ENCODE measurements at regions of chr10 and their contacts with region 1.

Region 1: GRCh38 chr10:3197348-3198003 is 24.9 kb upstream of the PITRM1 start:
- DNase-seq: peak; percentile 94
- H3K4me3 Mint-ChIP-seq: no peak overlapping the region
- H3K27ac Mint-ChIP-seq: no peak overlapping the region
- H3K4me1 Mint-ChIP-seq: peaks cover 11% of the 10 kb centered on the region
- H3K27me3 Mint-ChIP-seq: peaks cover 70% of the 10 kb centered on the region

Region 2: GRCh38 chr10:3095373-3096139 is 101.9 kb before region 1 on chr10:
- CTCF ChIA-PET with region 1: no interaction called
- POLR2A ChIA-PET with region 1: interaction called, 3 read pairs
- intact Hi-C with region 1: loop called (anchors 1 kb)
- DNase-seq: peak; percentile 80
- H3K4me3 Mint-ChIP-seq: peak overlapping the region; percentile 17
- H3K27ac Mint-ChIP-seq: peak overlapping the region; percentile 87
- H3K4me1 Mint-ChIP-seq: peaks cover 74% of the 10 kb centered on the region
- H3K27me3 Mint-ChIP-seq: no peaks in the 10 kb centered on the region

Region 3: GRCh38 chr10:3151889-3152565 is 45.4 kb before region 1 on chr10:
- CTCF ChIA-PET with region 1: no interaction called
- POLR2A ChIA-PET with region 1: no interaction called
- intact Hi-C with region 1: no loop called
- DNase-seq: no peak
- H3K4me3 Mint-ChIP-seq: no peak overlapping the region
- H3K27ac Mint-ChIP-seq: peak overlapping the region; percentile 44
- H3K4me1 Mint-ChIP-seq: peaks cover 11% of the 10 kb centered on the region
- H3K27me3 Mint-ChIP-seq: no peaks in the 10 kb centered on the region

Region 4: DNA sequence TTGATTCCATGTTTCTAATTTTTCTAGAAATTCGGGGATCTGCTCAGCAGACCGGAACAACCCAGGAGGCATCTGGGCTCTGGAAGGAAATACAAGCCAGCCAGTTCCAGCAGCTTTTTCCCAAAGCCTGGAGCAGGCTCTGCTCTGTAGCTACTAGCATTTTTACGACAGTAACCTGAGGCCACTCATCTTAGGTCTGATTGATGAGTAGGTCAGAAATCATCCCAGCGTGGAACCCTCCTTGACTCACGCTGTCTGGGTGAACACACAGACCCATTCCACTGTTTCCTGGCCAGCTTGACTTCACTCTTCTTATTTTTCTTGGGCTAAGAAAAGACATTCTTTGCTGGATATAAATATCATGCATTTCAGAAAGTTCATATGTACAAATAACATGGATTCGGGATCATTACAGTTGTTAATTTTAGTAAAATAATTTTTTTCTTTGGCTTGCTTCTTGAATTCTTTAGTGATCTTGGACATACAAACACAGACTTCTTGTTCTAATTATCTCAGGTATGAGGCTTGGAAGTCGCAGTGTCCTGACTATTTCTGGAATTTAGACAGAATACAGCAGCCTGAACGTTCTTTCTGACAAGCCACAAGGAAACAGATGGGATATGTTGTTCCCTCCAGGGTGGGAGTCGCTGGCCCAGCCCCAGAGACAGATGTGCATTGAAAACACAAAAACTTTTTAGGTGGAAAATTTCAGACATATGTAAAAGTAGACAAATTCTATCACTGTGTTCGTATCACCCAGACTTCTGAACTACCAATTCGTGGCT is 29.7 kb after region 1 on chr10:
- CTCF ChIA-PET with region 1: interaction called, 16 read pairs
- POLR2A ChIA-PET with region 1: no interaction called
- intact Hi-C with region 1: loop called (anchors 1 kb)
- DNase-seq: no peak
- H3K4me3 Mint-ChIP-seq: no peak overlapping the region
- H3K27ac Mint-ChIP-seq: no peak overlapping the region
- H3K4me1 Mint-ChIP-seq: peaks cover 23% of the 10 kb centered on the region
- H3K27me3 Mint-ChIP-seq: peaks cover 5% of the 10 kb centered on the region

Region 5: DNA sequence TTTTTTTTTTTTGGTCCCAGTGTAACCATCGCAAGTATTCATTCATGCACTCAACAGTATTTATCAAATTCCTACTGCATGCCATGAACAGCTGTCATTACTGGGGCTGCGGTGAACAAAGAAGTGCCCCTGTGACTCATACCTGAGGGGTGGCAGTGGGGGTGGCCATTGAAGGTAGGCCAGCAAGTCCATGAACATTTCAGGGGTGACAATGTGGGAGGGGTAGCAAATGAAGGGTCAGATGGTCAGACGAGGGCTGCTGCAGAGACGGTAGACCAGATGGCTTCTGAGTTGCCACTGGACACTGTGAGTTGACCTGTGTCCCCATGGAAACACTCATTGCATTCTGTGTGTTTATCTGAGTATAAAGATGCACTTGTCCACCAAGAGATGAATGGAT is 67.6 kb after region 1 on chr10:
- CTCF ChIA-PET with region 1: no interaction called
- POLR2A ChIA-PET with region 1: no interaction called
- intact Hi-C with region 1: no loop called
- DNase-seq: no peak
- H3K4me3 Mint-ChIP-seq: no peak overlapping the region
- H3K27ac Mint-ChIP-seq: no peak overlapping the region
- H3K4me1 Mint-ChIP-seq: peaks cover 2% of the 10 kb centered on the region
- H3K27me3 Mint-ChIP-seq: peaks cover 16% of the 10 kb centered on the region

Region 6: DNA sequence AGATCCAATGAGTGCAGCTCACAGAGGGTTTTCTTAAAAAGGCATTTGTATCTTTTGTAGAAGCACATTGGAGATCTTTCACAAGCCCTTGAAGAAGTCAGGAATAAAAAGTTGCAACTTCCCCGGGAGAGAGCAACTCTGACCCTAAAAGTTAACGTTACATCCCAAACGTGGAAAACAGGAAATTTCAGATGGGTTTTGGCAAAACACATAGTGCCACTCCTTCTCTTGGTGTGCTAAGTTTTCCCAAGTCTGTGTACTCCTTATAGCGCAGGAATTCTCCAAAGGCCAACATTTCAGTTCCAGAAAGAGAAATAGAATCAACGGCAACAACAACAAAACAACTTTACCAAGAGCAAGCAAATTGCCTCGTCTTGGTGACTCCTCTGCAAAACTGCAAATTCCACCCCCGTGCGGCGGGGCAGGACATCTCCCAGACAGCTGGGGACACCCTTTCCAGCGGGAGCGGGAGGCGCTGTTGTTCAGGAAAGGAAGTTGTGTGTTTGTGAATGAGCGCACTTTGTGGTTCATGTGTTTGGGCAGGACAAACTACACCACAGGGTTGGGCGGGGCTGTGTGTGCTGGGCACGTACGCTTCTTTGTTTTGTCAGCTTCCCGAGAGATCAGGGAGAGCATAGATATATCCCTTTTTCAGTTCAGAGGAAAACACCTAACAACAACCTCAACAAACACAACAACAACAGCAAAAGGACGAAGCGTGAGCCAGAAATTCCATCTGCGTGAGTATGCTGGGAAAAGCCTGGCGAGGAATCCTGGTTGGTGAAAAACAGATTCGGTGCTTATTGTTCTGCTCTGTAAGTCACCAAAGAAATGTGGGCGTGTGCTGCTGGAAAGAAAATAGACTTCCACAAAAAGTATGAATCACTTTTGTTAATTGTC is 269.8 kb after region 1 on chr10:
- CTCF ChIA-PET with region 1: interaction called, 4 read pairs
- POLR2A ChIA-PET with region 1: interaction called, 3 read pairs
- intact Hi-C with region 1: loop called (anchors 5 kb)
- DNase-seq: peak; percentile 29
- H3K4me3 Mint-ChIP-seq: peak overlapping the region; percentile 64
- H3K27ac Mint-ChIP-seq: peak overlapping the region; percentile 63
- H3K4me1 Mint-ChIP-seq: peaks cover 46% of the 10 kb centered on the region
- H3K27me3 Mint-ChIP-seq: no peaks in the 10 kb centered on the region

Region 7: GRCh38 chr10:4813023-4813422 is 1615.5 kb after region 1 on chr10:
- CTCF ChIA-PET with region 1: interaction called, 14 read pairs
- POLR2A ChIA-PET with region 1: no interaction called
- intact Hi-C with region 1: no loop called
- DNase-seq: no peak
- H3K4me3 Mint-ChIP-seq: no peak overlapping the region
- H3K27ac Mint-ChIP-seq: no peak overlapping the region
- H3K4me1 Mint-ChIP-seq: no peaks in the 10 kb centered on the region
- H3K27me3 Mint-ChIP-seq: peaks cover 5% of the 10 kb centered on the region

Measured in activated CD4-positive, alpha-beta memory T cell treated with anti-CD3 and anti-CD28 coated beads for 36 hours (primary cell).